IMR-90 (cell line): ENCODE measurements at regions of chr12 and their contacts with region 1.

Region 1: DNA sequence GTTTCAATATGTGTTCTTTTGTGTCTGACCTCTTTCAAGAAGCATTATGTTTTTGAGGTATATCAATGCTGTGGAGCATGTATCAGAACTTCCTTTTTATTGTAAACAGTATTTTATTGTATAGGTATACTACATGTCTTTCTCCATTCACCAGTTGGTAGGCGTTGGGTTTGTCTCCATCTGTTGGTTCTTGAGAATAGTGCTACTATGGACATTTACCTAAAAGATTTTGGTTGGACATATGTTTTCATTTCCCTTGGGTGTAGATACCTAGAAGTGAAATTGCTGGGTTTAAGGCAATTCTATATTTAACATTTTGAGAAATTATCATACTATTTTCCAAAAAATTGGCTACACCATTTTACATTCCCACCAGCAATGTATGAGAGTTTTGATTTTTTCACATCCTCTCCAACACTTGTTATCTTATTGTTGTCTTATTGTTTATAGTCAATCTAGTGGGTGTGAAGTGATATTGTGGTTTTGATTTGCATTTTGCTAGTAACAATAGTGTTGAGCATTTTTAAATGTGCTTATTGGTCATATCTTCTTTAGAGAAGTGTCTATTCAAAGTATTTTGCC is 409.2 kb downstream of the IPO8 start:
- DNase-seq: peak; percentile 42
- ATAC-seq: peak; percentile 75
- H3K4me3 ChIP-seq: no peak overlapping the region
- H3K27ac ChIP-seq: no peak overlapping the region
- H3K4me1 ChIP-seq: no peaks in the 10 kb centered on the region
- H3K27me3 ChIP-seq: no peaks in the 10 kb centered on the region
- CTCF ChIP-seq: peak; percentile 62
- POLR2A ChIP-seq: no peak
- RAD21 ChIP-seq: peak; percentile 72

Region 2: GRCh38 chr12:29309320-29309902 is 977.0 kb before region 1 on chr12:
- CTCF ChIA-PET with region 1: no interaction called
- POLR2A ChIA-PET with region 1: no interaction called
- dilution Hi-C with region 1: no loop called
- in situ Hi-C with region 1: no loop called
- intact Hi-C with region 1: loop called (anchors 5 kb)
- DNase-seq: peak; percentile 47
- ATAC-seq: 0 out of 2 replicates have a peak, but pooled peaks have one; percentile 29
- H3K4me3 ChIP-seq: no peak overlapping the region
- H3K27ac ChIP-seq: no peak overlapping the region
- H3K4me1 ChIP-seq: no peaks in the 10 kb centered on the region
- H3K27me3 ChIP-seq: no peaks in the 10 kb centered on the region
- CTCF ChIP-seq: peak; percentile 67
- POLR2A ChIP-seq: no peak
- RAD21 ChIP-seq: peak; percentile 67

Region 3: GRCh38 chr12:30100741-30101140 is 185.7 kb before region 1 on chr12:
- CTCF ChIA-PET with region 1: no interaction called
- POLR2A ChIA-PET with region 1: no interaction called
- dilution Hi-C with region 1: no loop called
- in situ Hi-C with region 1: no loop called
- intact Hi-C with region 1: no loop called
- DNase-seq: no peak
- ATAC-seq: no peak
- H3K4me3 ChIP-seq: no peak overlapping the region
- H3K27ac ChIP-seq: no peak overlapping the region
- H3K4me1 ChIP-seq: no peaks in the 10 kb centered on the region
- H3K27me3 ChIP-seq: no peaks in the 10 kb centered on the region; the same call in 1 of the 2 replicates
- CTCF ChIP-seq: no peak
- POLR2A ChIP-seq: no peak
- RAD21 ChIP-seq: no peak

Region 4: GRCh38 chr12:30457621-30458289 is 171.3 kb after region 1 on chr12:
- CTCF ChIA-PET with region 1: no interaction called
- POLR2A ChIA-PET with region 1: no interaction called
- dilution Hi-C with region 1: no loop called
- in situ Hi-C with region 1: no loop called
- intact Hi-C with region 1: no loop called
- DNase-seq: peak; percentile 64
- ATAC-seq: peak; percentile 85
- H3K4me3 ChIP-seq: no peak overlapping the region
- H3K27ac ChIP-seq: no peak overlapping the region
- H3K4me1 ChIP-seq: no peaks in the 10 kb centered on the region
- H3K27me3 ChIP-seq: no peaks in the 10 kb centered on the region
- CTCF ChIP-seq: peak; percentile 28; the same call in 1 of the 2 replicates
- POLR2A ChIP-seq: no peak
- RAD21 ChIP-seq: no peak; the same call in 1 of the 2 replicates